ENCODE measurements at regions of chr12 and their contacts with region 1.

Region 1: DNA sequence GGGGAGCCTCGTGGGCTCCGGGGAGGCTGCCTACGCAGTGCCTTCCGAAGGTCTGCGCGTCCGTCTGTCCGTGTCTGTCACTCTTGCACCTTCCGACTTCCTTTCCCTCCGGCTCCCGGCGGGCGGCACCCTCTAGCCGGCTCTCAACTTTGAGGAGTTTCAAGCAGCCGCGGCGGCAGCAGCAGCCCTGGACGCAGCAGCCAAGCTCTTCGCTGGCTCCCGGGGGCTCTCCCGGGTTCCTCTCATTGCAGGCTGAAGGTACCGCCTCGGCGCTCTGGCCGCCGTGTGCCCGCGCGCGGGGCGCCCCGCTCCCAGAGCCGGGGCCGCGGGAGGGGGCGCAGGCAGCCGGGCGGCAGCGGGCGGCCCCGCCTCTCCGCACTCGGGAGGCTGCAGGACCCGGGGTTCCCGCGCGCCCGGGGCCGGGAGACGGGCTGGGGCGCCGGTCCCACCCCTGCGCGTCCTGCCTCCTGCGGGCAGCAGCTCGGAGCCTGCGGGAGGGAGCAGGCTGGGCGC is at the starts of genes AMIGO2 and PCED1B:
- DNase-seq: peak; percentile 31 to 72 (median 51)
- ATAC-seq: peak; percentile 71
- H3K4me3 ChIP-seq: peak within 1 kb of the TSS; percentile 84
- H3K4me3 Mint-ChIP-seq: peak within 1 kb of the TSS; percentile 91 to 100 (median 96)
- H3K27ac ChIP-seq: peak within 1 kb of the TSS; percentile 80
- H3K27ac Mint-ChIP-seq: peak within 1 kb of the TSS; percentile 87 to 99 (median 96)
- H3K4me1 ChIP-seq: peaks cover 39 to 45% of the 10 kb centered on the region in 2 donors
- H3K4me1 Mint-ChIP-seq: peaks cover 44 to 83% (median 74%) of the 10 kb centered on the region in 7 donors
- H3K27me3 ChIP-seq: no peaks in the 10 kb centered on the region
- H3K27me3 Mint-ChIP-seq: no peaks in the 10 kb centered on the region
- total RNA-seq, gene AMIGO2: 6.8 to 13.5 (median 12.8) TPM
- total RNA-seq, gene PCED1B: 41.4 to 98.3 (median 70.0) TPM

Region 2: GRCh38 chr12:47124451-47124850 is 44.9 kb after region 1 on chr12:
- CTCF ChIA-PET with region 1: no interaction called
- POLR2A ChIA-PET with region 1: interaction called, 3 read pairs
- intact Hi-C with region 1: loop called in 1 of 2 experiments (anchors 5 kb)
- DNase-seq: no peak
- ATAC-seq: no peak
- H3K4me3 ChIP-seq: no peak overlapping the region
- H3K4me3 Mint-ChIP-seq: no peak overlapping the region
- H3K27ac ChIP-seq: no peak overlapping the region
- H3K27ac Mint-ChIP-seq: no peak overlapping the region
- H3K4me1 ChIP-seq: no peaks in the 10 kb centered on the region
- H3K4me1 Mint-ChIP-seq: peaks cover 0 to 41% (median 27%) of the 10 kb centered on the region in 7 donors
- H3K27me3 ChIP-seq: no peaks in the 10 kb centered on the region
- H3K27me3 Mint-ChIP-seq: no peaks in the 10 kb centered on the region

Region 3: GRCh38 chr12:47190271-47190750 is 110.8 kb after region 1 on chr12:
- CTCF ChIA-PET with region 1: interaction called, 12 read pairs
- POLR2A ChIA-PET with region 1: interaction called, 24 read pairs
- intact Hi-C with region 1: loop called (anchors 1 to 2 kb)
- DNase-seq: no peak
- ATAC-seq: no peak
- H3K4me3 ChIP-seq: no peak overlapping the region
- H3K4me3 Mint-ChIP-seq: peak overlapping the region; percentile 42 to 87 (median 76)
- H3K27ac ChIP-seq: peak overlapping the region; percentile 61
- H3K27ac Mint-ChIP-seq: peak overlapping the region; percentile 81 to 98 (median 93)
- H3K4me1 ChIP-seq: peaks cover 52 to 77% of the 10 kb centered on the region in 2 donors
- H3K4me1 Mint-ChIP-seq: peaks cover 69 to 98% (median 93%) of the 10 kb centered on the region in 7 donors
- H3K27me3 ChIP-seq: no peaks in the 10 kb centered on the region
- H3K27me3 Mint-ChIP-seq: no peaks in the 10 kb centered on the region

Region 4: GRCh38 chr12:47276621-47277309 is 197.2 kb after region 1 on chr12:
- CTCF ChIA-PET with region 1: no interaction called
- POLR2A ChIA-PET with region 1: interaction called, 3 read pairs
- intact Hi-C with region 1: loop called in 1 of 2 experiments (anchors 1 kb)
- DNase-seq: peak; percentile 12 to 89 (median 84)
- ATAC-seq: peak; percentile 97
- H3K4me3 ChIP-seq: peak overlapping the region; percentile 31
- H3K4me3 Mint-ChIP-seq: peak overlapping the region; percentile 51 to 83 (median 74)
- H3K27ac ChIP-seq: peak overlapping the region; percentile 69
- H3K27ac Mint-ChIP-seq: peak overlapping the region; percentile 90 to 98 (median 92)
- H3K4me1 ChIP-seq: peaks cover 28 to 73% of the 10 kb centered on the region in 2 donors
- H3K4me1 Mint-ChIP-seq: peaks cover 42 to 97% (median 90%) of the 10 kb centered on the region in 7 donors
- H3K27me3 ChIP-seq: no peaks in the 10 kb centered on the region
- H3K27me3 Mint-ChIP-seq: no peaks in the 10 kb centered on the region

Region 5: DNA sequence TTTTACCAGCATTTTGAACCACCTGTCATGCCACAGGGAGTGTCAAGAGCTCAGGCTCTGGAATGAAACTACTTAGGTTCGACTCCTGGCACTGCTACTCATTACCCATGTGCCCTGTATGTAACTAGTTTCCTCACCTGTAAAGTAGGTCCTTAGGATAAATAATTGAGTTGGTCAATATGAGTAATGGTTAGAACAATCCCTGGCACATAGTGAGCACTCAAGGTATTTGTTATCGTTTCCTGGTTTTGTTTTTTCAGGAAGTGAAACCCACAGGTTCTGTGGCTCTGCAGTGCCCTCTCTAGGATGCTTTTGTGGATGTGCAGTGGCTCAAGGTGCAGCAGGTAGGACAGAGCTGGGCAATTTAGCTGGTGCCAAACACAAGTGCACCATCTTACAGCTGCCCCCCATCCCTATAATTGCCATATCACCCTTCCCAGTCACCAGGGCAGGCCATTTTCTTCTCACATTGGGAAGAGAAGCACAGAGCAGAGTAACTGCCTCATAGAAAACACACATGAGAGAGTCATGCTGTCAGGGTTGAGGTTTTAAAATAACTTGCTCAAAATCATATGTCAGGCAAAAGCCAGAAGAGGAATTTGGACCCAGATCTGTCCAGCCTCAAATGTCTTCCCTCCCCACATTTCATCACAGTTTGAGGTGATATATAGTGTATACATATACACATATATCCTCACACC is 328.8 kb after region 1 on chr12:
- CTCF ChIA-PET with region 1: interaction called, 4 read pairs
- POLR2A ChIA-PET with region 1: no interaction called
- intact Hi-C with region 1: loop called in 1 of 2 experiments (anchors 1 kb)
- DNase-seq: peak in 5 of 9 donors; percentile 22 to 55 (median 42)
- ATAC-seq: peak; percentile 71
- H3K4me3 ChIP-seq: no peak overlapping the region
- H3K4me3 Mint-ChIP-seq: peak overlapping the region in 7 of 10 donors; percentile 19 to 66 (median 49)
- H3K27ac ChIP-seq: peak overlapping the region; percentile 3
- H3K27ac Mint-ChIP-seq: peak overlapping the region; percentile 22 to 91 (median 83)
- H3K4me1 ChIP-seq: peaks cover 13 to 65% of the 10 kb centered on the region in 2 donors
- H3K4me1 Mint-ChIP-seq: peaks cover 36 to 89% (median 76%) of the 10 kb centered on the region in 7 donors
- H3K27me3 ChIP-seq: no peaks in the 10 kb centered on the region
- H3K27me3 Mint-ChIP-seq: no peaks in the 10 kb centered on the region